ENCODE measurements at regions of chr11 and their contacts with region 1.

Region 1: DNA sequence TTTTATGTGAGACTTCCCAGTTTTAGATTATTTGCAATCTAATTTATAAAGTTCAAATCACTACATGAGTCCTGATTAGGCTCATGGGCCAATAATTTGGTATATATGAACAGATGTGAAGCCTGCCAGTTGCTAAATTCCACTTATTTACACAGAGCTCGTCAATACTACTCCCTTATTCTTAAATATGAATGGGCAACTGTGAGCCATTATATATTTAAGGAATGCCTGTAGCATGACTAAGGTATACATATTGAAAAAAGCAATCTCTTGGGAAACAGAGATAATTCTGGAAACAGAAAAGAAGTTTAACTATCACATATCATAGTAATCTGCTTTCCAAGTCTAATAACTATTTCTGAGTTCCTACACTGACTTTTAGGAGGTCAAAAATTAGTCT is 27.0 kb downstream of the RBMXL2 start:
- H3K4me3 Mint-ChIP-seq: no peak overlapping the region
- H3K27ac Mint-ChIP-seq: no peak overlapping the region
- H3K4me1 Mint-ChIP-seq: no peaks in the 10 kb centered on the region
- H3K27me3 Mint-ChIP-seq: peaks cover 7% of the 10 kb centered on the region

Region 2: GRCh38 chr11:7167976-7168740 is 52.4 kb after region 1 on chr11:
- intact Hi-C with region 1: loop called (anchors 2 kb)
- H3K4me3 Mint-ChIP-seq: no peak overlapping the region
- H3K27ac Mint-ChIP-seq: no peak overlapping the region
- H3K4me1 Mint-ChIP-seq: no peaks in the 10 kb centered on the region
- H3K27me3 Mint-ChIP-seq: no peaks in the 10 kb centered on the region